Activated CD4-positive, alpha-beta memory T cell treated with anti-CD3 and anti-CD28 coated beads for 36 hours (primary cell): ENCODE measurements at regions of chr1 and their contacts with region 1.

Region 1: GRCh38 chr1:36187800-36188593 is 32.0 kb downstream of the MAP7D1 start:
- DNase-seq: peak; percentile 89
- H3K4me3 Mint-ChIP-seq: no peak overlapping the region
- H3K27ac Mint-ChIP-seq: peak overlapping the region; percentile 55
- H3K4me1 Mint-ChIP-seq: peaks cover 4% of the 10 kb centered on the region
- H3K27me3 Mint-ChIP-seq: no peaks in the 10 kb centered on the region

Region 2: DNA sequence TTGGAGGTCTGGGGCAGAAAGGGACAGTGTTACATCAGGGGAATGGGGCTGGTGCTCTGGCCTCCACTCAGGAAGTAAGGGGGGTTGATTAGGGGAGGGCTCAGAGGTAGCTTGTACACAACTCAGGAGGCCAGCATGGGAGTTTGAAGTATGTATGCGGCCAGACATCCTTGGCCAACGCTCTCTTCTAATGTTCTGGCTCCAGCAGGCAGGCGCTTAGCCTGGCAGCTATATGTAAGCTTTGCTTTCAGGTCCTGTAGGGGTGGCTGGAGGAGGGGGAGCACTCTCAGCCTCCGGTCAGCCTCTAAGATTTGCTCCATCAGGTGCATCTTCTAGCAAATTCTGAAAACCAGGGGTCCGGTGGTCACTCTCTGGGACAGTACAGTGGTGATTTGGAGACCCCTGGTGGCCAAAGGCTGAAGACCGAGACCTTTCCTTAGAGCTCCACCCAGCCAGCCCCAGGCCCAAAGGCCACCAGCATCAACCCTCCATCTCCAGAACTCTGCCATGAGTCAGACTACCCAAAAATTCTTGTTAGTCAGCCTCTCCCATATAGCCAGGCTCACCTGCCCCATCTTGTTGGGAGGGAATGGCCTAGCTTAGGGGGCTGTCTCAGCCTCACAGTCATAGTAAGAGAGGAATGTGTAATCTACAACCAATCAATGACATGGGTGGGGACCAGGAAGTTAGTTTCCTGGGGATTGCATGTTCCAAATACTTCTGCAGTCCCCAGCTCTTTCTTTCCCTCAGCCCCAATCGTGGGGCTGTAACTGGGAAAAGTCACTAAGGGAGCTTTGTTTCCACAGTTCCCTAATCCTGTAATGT is 53.3 kb before region 1 on chr1:
- CTCF ChIA-PET with region 1: interaction called, 19 read pairs
- POLR2A ChIA-PET with region 1: no interaction called
- intact Hi-C with region 1: no loop called
- DNase-seq: peak; percentile 57
- H3K4me3 Mint-ChIP-seq: no peak overlapping the region
- H3K27ac Mint-ChIP-seq: no peak overlapping the region
- H3K4me1 Mint-ChIP-seq: peaks cover 3% of the 10 kb centered on the region
- H3K27me3 Mint-ChIP-seq: no peaks in the 10 kb centered on the region

Region 3: GRCh38 chr1:36155408-36156328 is 32.3 kb before region 1 on chr1 and contains the start of gene MAP7D1:
- CTCF ChIA-PET with region 1: interaction called, 151 read pairs
- POLR2A ChIA-PET with region 1: interaction called, 10 read pairs
- intact Hi-C with region 1: no loop called
- DNase-seq: peak; percentile 88
- H3K4me3 Mint-ChIP-seq: peak within 1 kb of the TSS; percentile 86
- H3K27ac Mint-ChIP-seq: peak within 1 kb of the TSS; percentile 92
- H3K4me1 Mint-ChIP-seq: peaks cover 68% of the 10 kb centered on the region
- H3K27me3 Mint-ChIP-seq: no peaks in the 10 kb centered on the region
- total RNA-seq, gene MAP7D1: 138 to 143 TPM

Region 4: DNA sequence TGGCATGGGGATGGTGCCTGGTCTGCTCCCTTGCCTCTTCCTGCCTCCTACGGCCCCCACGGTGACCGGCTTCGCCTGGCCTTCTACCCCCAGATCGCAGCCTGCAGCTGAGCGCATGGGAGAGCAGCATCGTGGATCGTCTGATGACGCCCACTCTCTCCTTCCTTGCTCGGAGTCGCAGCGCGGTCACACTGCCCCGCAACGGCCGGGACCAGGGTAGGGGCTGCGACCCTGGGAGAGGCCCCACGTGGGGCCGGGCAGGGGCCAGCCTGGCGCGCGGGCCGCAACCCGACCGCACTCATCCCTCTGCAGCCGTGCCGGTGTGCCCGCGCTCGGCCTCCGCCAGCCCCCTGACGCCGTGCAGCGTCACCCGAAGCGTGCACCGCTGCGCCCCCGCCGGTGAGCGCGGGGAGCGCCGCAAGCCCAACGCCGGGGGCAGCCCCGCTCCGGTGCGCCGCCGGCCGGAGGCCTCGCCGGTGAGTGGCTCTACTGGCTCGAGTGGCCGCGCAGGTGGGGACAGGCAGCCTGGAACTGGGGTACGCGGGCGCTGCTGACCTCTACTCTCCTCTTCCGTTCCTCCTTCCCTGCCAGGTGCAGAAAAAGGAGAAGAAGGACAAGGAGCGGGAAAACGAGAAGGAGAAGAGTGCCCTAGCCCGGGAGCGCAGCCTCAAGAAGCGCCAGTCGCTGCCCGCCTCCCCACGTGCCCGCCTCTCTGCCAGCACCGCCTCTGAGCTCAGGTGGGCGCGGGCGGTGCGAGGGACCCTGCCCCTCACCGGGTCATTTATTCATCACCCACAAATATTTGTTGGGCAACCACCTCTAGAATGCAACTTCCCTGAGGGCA is 11.7 kb before region 1 on chr1:
- CTCF ChIA-PET with region 1: no interaction called
- POLR2A ChIA-PET with region 1: no interaction called
- intact Hi-C with region 1: no loop called
- DNase-seq: no peak
- H3K4me3 Mint-ChIP-seq: no peak overlapping the region
- H3K27ac Mint-ChIP-seq: no peak overlapping the region
- H3K4me1 Mint-ChIP-seq: peaks cover 7% of the 10 kb centered on the region
- H3K27me3 Mint-ChIP-seq: no peaks in the 10 kb centered on the region

Region 5: GRCh38 chr1:36223993-36224536 is 36.1 kb after region 1 on chr1 and contains the start of gene THRAP3:
- CTCF ChIA-PET with region 1: interaction called, 8 read pairs
- POLR2A ChIA-PET with region 1: no interaction called
- intact Hi-C with region 1: loop called (anchors 5 kb)
- DNase-seq: peak; percentile 100
- H3K4me3 Mint-ChIP-seq: peak within 1 kb of the TSS; percentile 99
- H3K27ac Mint-ChIP-seq: peak within 1 kb of the TSS; percentile 100
- H3K4me1 Mint-ChIP-seq: peaks cover 30% of the 10 kb centered on the region
- H3K27me3 Mint-ChIP-seq: no peaks in the 10 kb centered on the region
- total RNA-seq, gene THRAP3: 135 to 138 TPM